H1 (cell line): ENCODE measurements at regions of chr17 and their contacts with region 1.

Region 1: GRCh38 chr17:78013683-78014467 is 55.4 kb downstream of the TNRC6C start:
- DNase-seq: peak in 1 of 2 experiments; percentile 57
- H3K4me3 ChIP-seq: no peak overlapping the region
- H3K27ac ChIP-seq: no peak overlapping the region
- H3K4me1 ChIP-seq: 0 out of 7 replicates have a peak, but pooled peaks cover 0 to 1% (median 0%) of the 10 kb centered on the region in 4 experiments
- H3K27me3 ChIP-seq: no peaks in the 10 kb centered on the region
- CTCF ChIP-seq: peak in 2 of 3 experiments; percentile 71 to 74; a peak in 3 of 4 replicates
- EP300 ChIP-seq: no peak
- POLR2A ChIP-seq: no peak
- RAD21 ChIP-seq: peak; percentile 86 to 89

Region 2: GRCh38 chr17:77772461-77772897 is 241.4 kb before region 1 on chr17:
- CTCF ChIA-PET with region 1: interaction called, 23 read pairs
- POLR2A ChIA-PET with region 1: no interaction called
- DNase-seq: peak; percentile 38 to 87
- H3K4me3 ChIP-seq: peak overlapping the region in 1 of 4 experiments; percentile 14; a peak in 1 of 8 replicates
- H3K27ac ChIP-seq: no peak overlapping the region
- H3K4me1 ChIP-seq: peaks cover 0 to 6% (median 5%) of the 10 kb centered on the region in 4 experiments; a peak in 4 of 7 replicates
- H3K27me3 ChIP-seq: peaks cover 0 to 3% (median 0%) of the 10 kb centered on the region in 4 experiments; a peak in 3 of 7 replicates
- CTCF ChIP-seq: peak; percentile 87 to 97 (median 95)
- EP300 ChIP-seq: no peak
- POLR2A ChIP-seq: no peak
- RAD21 ChIP-seq: peak; percentile 91 to 97

Region 3: GRCh38 chr17:77909236-77909635 is 104.6 kb before region 1 on chr17:
- CTCF ChIA-PET with region 1: interaction called, 42 read pairs
- POLR2A ChIA-PET with region 1: interaction called, 4 read pairs
- DNase-seq: no peak
- H3K4me3 ChIP-seq: no peak overlapping the region
- H3K27ac ChIP-seq: no peak overlapping the region
- H3K4me1 ChIP-seq: peaks cover 0 to 8% (median under 1%) of the 10 kb centered on the region in 4 experiments; a peak in 3 of 7 replicates
- H3K27me3 ChIP-seq: 0 out of 7 replicates have a peak, but pooled peaks cover 0 to 2% (median 0%) of the 10 kb centered on the region in 4 experiments
- CTCF ChIP-seq: no peak
- EP300 ChIP-seq: no peak
- POLR2A ChIP-seq: no peak
- RAD21 ChIP-seq: no peak

Region 4: GRCh38 chr17:77924757-77925336 is 89.0 kb before region 1 on chr17:
- CTCF ChIA-PET with region 1: interaction called, 12 read pairs
- POLR2A ChIA-PET with region 1: no interaction called
- DNase-seq: peak; percentile 62 to 80
- H3K4me3 ChIP-seq: peak overlapping the region in 3 of 4 experiments; percentile 7 to 24 (median 20); a peak in 2 of 8 replicates
- H3K27ac ChIP-seq: no peak overlapping the region
- H3K4me1 ChIP-seq: peaks cover 12 to 38% (median 29%) of the 10 kb centered on the region in 4 experiments
- H3K27me3 ChIP-seq: no peaks in the 10 kb centered on the region; a peak in 1 of 7 replicates
- CTCF ChIP-seq: no peak
- EP300 ChIP-seq: no peak; a peak in 1 of 3 replicates
- POLR2A ChIP-seq: no peak
- RAD21 ChIP-seq: no peak

Region 5: DNA sequence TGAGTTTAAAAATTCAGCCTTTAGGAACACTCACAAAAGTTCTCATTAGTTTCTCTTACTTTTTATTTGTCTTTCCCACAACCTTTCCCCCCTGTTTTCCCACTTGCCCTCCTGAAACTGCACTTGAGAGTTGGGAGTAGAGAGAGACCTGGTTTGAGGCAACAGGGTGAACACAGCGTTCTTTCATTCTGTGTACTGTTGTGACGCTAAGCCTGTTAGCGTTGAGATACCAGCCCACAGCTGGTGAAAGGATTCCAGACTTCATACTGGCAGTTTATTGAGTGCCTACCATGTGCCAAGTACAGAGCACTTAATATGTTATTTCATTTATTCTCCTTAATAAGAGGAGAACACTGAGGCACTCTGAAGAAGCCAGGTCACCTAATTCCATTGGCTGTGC is 45.1 kb before region 1 on chr17:
- CTCF ChIA-PET with region 1: interaction called, 25 read pairs
- POLR2A ChIA-PET with region 1: no interaction called
- DNase-seq: no peak
- H3K4me3 ChIP-seq: no peak overlapping the region
- H3K27ac ChIP-seq: no peak overlapping the region
- H3K4me1 ChIP-seq: peaks cover 0 to 2% (median 0%) of the 10 kb centered on the region in 4 experiments; a peak in 1 of 7 replicates
- H3K27me3 ChIP-seq: no peaks in the 10 kb centered on the region
- CTCF ChIP-seq: no peak
- EP300 ChIP-seq: no peak
- POLR2A ChIP-seq: no peak
- RAD21 ChIP-seq: no peak

Region 6: DNA sequence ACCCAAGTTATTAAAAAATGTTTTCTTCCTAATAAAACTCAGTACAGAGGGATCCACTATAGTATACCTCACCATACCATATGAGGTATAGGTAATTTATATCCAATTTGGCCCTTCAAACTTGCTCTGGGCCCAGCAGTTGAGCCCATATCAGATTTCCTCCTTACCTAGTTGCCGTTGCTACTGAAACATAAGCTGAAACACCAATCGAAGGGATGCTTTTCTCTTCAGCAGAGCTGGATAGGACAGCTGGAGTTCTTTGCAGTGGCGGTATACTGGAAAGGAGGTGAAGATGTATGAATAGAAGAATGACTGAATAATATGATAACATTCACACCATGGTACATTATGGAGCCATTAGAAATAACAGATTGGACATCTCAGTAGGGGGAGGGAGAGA is 12.7 kb before region 1 on chr17:
- CTCF ChIA-PET with region 1: interaction called, 40 read pairs
- POLR2A ChIA-PET with region 1: interaction called, 3 read pairs
- DNase-seq: no peak
- H3K4me3 ChIP-seq: no peak overlapping the region
- H3K27ac ChIP-seq: no peak overlapping the region
- H3K4me1 ChIP-seq: peaks cover 4 to 15% (median 8%) of the 10 kb centered on the region in 4 experiments; a peak in 6 of 7 replicates
- H3K27me3 ChIP-seq: no peaks in the 10 kb centered on the region
- CTCF ChIP-seq: no peak
- EP300 ChIP-seq: no peak
- POLR2A ChIP-seq: no peak
- RAD21 ChIP-seq: no peak

Region 7: GRCh38 chr17:78053777-78054468 is 40.0 kb after region 1 on chr17:
- CTCF ChIA-PET with region 1: no interaction called
- POLR2A ChIA-PET with region 1: no interaction called
- DNase-seq: no peak
- H3K4me3 ChIP-seq: no peak overlapping the region
- H3K27ac ChIP-seq: no peak overlapping the region
- H3K4me1 ChIP-seq: no peaks in the 10 kb centered on the region
- H3K27me3 ChIP-seq: no peaks in the 10 kb centered on the region
- CTCF ChIP-seq: no peak
- EP300 ChIP-seq: no peak
- POLR2A ChIP-seq: no peak
- RAD21 ChIP-seq: no peak